CD8-positive, alpha-beta T cell (primary cell): ENCODE measurements at regions of chr1 and their contacts with region 1.

Region 1: GRCh38 chr1:114757455-114758250 is at the start of gene CSDE1:
- DNase-seq: peak; percentile 94 to 99 (median 97)
- ATAC-seq: peak; percentile 79
- H3K4me3 ChIP-seq: peak within 1 kb of the TSS; percentile 95 to 100
- H3K4me3 Mint-ChIP-seq: peak within 1 kb of the TSS; percentile 100
- H3K27ac ChIP-seq: peak within 1 kb of the TSS; percentile 97 to 100
- H3K27ac Mint-ChIP-seq: peak within 1 kb of the TSS; percentile 100
- H3K4me1 ChIP-seq: peaks cover 44% of the 10 kb centered on the region
- H3K4me1 Mint-ChIP-seq: peaks cover 51% of the 10 kb centered on the region
- H3K27me3 ChIP-seq: no peaks in the 10 kb centered on the region
- H3K27me3 Mint-ChIP-seq: no peaks in the 10 kb centered on the region
- CTCF ChIP-seq: no peak
- total RNA-seq, gene CSDE1: 732 to 774 TPM

Region 2: GRCh38 chr1:112955781-112956543 is 1801.7 kb before region 1 on chr1 and contains the start of gene SLC16A1:
- CTCF ChIA-PET with region 1: no interaction called
- POLR2A ChIA-PET with region 1: no interaction called
- intact Hi-C with region 1: loop called in 1 of 2 experiments (anchors 10 kb)
- DNase-seq: peak; percentile 68 to 92 (median 86)
- ATAC-seq: peak; percentile 78
- H3K4me3 ChIP-seq: peak within 1 kb of the TSS; percentile 97 to 98
- H3K4me3 Mint-ChIP-seq: peak within 1 kb of the TSS; percentile 98
- H3K27ac ChIP-seq: peak within 1 kb of the TSS; percentile 79 to 87
- H3K27ac Mint-ChIP-seq: peak within 1 kb of the TSS; percentile 90
- H3K4me1 ChIP-seq: peaks cover 25% of the 10 kb centered on the region
- H3K4me1 Mint-ChIP-seq: peaks cover 63% of the 10 kb centered on the region
- H3K27me3 ChIP-seq: no peaks in the 10 kb centered on the region
- H3K27me3 Mint-ChIP-seq: no peaks in the 10 kb centered on the region
- CTCF ChIP-seq: no peak
- total RNA-seq, gene SLC16A1: 34.0 to 34.1 TPM

Region 3: DNA sequence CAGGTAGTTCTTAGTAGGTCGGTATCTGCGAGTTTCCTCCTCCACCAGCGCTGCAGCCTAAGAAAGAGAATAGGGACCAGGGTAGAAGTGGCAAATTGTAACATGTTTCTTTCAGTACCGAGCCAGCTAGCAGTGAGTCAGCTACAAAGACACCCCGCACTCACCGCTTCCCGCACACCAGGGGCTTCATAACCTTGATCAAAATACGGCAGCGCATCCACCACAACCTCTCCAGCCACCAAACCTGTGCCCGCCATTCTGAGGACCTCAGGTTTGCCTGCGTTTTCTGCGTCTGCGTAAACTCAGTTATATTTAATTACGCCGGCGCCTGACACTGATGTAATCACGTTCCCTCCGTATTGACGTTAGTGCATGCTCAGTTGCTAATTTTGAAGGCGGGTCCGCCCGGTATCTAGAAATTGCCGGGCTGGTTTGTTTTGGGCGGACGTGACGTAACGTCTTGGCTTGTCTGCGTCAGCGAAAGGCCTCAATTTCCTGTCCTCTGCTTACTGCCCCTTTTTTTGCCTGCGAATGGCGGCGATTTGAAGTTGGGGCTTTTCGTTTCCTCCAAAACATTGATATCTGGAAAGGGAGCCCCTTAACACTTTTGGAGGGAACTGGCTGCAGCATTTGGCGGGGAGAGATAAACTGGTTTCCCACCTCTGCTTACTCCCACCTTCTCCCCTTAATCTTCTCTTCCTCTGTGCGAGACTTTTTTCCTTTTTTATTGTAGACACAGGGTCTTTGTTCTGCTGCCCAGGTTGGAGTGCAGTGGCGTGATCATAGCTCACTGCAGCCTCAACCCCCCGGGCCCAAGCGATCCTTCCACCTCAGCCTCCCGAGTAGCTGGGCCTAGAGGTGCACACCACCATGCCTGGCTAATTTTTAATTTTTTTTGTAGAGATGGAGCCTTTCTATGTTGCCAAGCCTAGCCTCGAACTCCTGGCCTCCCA is 176.0 kb before region 1 on chr1 and contains the start of gene BCAS2:
- CTCF ChIA-PET with region 1: no interaction called
- POLR2A ChIA-PET with region 1: interaction called, 4 read pairs
- intact Hi-C with region 1: loop called in 1 of 2 experiments (anchors 1 kb)
- DNase-seq: peak; percentile 90 to 99 (median 95)
- ATAC-seq: peak; percentile 95
- H3K4me3 ChIP-seq: peak within 1 kb of the TSS; percentile 56 to 72
- H3K4me3 Mint-ChIP-seq: peak within 1 kb of the TSS; percentile 96
- H3K27ac ChIP-seq: peak within 1 kb of the TSS; percentile 84 to 94
- H3K27ac Mint-ChIP-seq: peak within 1 kb of the TSS; percentile 99
- H3K4me1 ChIP-seq: peaks cover 22% of the 10 kb centered on the region
- H3K4me1 Mint-ChIP-seq: peaks cover 46% of the 10 kb centered on the region
- H3K27me3 ChIP-seq: no peaks in the 10 kb centered on the region
- H3K27me3 Mint-ChIP-seq: no peaks in the 10 kb centered on the region
- CTCF ChIP-seq: no peak
- total RNA-seq, gene BCAS2: 113 to 125 TPM

Region 4: GRCh38 chr1:114670083-114671010 is 87.3 kb before region 1 on chr1:
- CTCF ChIA-PET with region 1: no interaction called
- POLR2A ChIA-PET with region 1: no interaction called
- intact Hi-C with region 1: loop called in 1 of 2 experiments (anchors 2 kb)
- DNase-seq: peak in 8 of 9 experiments; percentile 2 to 90 (median 86)
- ATAC-seq: peak; percentile 96
- H3K4me3 ChIP-seq: peak overlapping the region; percentile 77 to 79
- H3K4me3 Mint-ChIP-seq: peak overlapping the region; percentile 98
- H3K27ac ChIP-seq: peak overlapping the region in 1 of 2 experiments; percentile 49
- H3K27ac Mint-ChIP-seq: peak overlapping the region; percentile 92
- H3K4me1 ChIP-seq: peaks cover 5% of the 10 kb centered on the region
- H3K4me1 Mint-ChIP-seq: peaks cover 14% of the 10 kb centered on the region
- H3K27me3 ChIP-seq: no peaks in the 10 kb centered on the region
- H3K27me3 Mint-ChIP-seq: peaks cover 11% of the 10 kb centered on the region
- CTCF ChIP-seq: no peak

Region 5: GRCh38 chr1:114716304-114717170 is 41.1 kb before region 1 on chr1 and contains the start of gene NRAS:
- CTCF ChIA-PET with region 1: no interaction called
- POLR2A ChIA-PET with region 1: interaction called, 23 read pairs
- intact Hi-C with region 1: loop called (anchors 1 kb)
- DNase-seq: peak; percentile 91 to 97 (median 97)
- ATAC-seq: peak; percentile 94
- H3K4me3 ChIP-seq: peak within 1 kb of the TSS; percentile 84 to 87
- H3K4me3 Mint-ChIP-seq: peak within 1 kb of the TSS; percentile 97
- H3K27ac ChIP-seq: peak within 1 kb of the TSS; percentile 94 to 99
- H3K27ac Mint-ChIP-seq: peak within 1 kb of the TSS; percentile 100
- H3K4me1 ChIP-seq: peaks cover 16% of the 10 kb centered on the region
- H3K4me1 Mint-ChIP-seq: peaks cover 34% of the 10 kb centered on the region
- H3K27me3 ChIP-seq: no peaks in the 10 kb centered on the region
- H3K27me3 Mint-ChIP-seq: no peaks in the 10 kb centered on the region
- CTCF ChIP-seq: no peak
- total RNA-seq, gene NRAS: 46.0 to 46.4 TPM

Region 6: GRCh38 chr1:115062542-115063011 is 304.9 kb after region 1 on chr1:
- CTCF ChIA-PET with region 1: no interaction called
- POLR2A ChIA-PET with region 1: no interaction called
- intact Hi-C with region 1: loop called in 1 of 2 experiments (anchors 10 kb)
- DNase-seq: peak; percentile 91 to 99 (median 94)
- ATAC-seq: peak; percentile 89
- H3K4me3 ChIP-seq: peak overlapping the region in 1 of 2 experiments; percentile 17
- H3K4me3 Mint-ChIP-seq: peak overlapping the region; percentile 79
- H3K27ac ChIP-seq: peak overlapping the region; percentile 74 to 93
- H3K27ac Mint-ChIP-seq: peak overlapping the region; percentile 100
- H3K4me1 ChIP-seq: peaks cover 35% of the 10 kb centered on the region
- H3K4me1 Mint-ChIP-seq: peaks cover 43% of the 10 kb centered on the region
- H3K27me3 ChIP-seq: no peaks in the 10 kb centered on the region
- H3K27me3 Mint-ChIP-seq: no peaks in the 10 kb centered on the region
- CTCF ChIP-seq: no peak

Region 7: DNA sequence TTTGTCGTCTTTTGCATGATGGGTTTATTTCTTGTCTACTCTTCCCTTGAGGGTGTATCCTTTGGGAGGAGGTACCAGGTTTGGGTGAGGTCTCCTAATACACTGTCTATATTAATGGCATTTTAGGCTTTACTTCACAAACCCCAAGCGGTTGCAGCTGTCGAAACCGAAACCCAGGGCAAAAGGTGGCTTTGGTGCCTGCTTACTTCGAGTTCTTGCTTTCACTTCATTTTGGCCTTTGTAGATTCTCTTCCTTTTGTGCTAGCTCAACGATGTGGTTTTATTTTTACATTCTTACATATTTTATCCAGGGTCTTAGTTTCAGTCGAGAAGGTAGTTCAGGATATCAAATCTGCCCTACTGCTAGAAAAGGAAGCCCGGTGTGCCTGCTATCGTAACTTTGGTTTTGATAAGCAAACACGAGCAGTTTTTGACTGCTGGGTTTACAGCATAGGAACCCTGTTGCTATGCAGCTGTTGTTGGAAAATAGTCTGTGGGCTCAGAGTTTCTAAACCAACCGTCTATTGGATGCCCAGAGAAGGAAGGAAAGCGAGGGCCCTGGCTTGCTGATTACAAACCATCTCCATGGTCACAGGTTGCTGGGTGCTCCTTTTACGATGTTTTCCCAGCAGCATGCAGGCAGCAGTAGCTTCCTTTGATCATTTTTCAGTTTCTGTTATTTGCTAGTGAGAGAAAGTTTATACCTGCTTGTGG is 341.5 kb after region 1 on chr1:
- CTCF ChIA-PET with region 1: no interaction called
- POLR2A ChIA-PET with region 1: interaction called, 3 read pairs
- intact Hi-C with region 1: loop called in 1 of 2 experiments (anchors 1 kb)
- DNase-seq: peak; percentile 55 to 96 (median 74)
- ATAC-seq: peak; percentile 89
- H3K4me3 ChIP-seq: peak overlapping the region; percentile 51 to 56
- H3K4me3 Mint-ChIP-seq: peak overlapping the region; percentile 86
- H3K27ac ChIP-seq: peak overlapping the region; percentile 95
- H3K27ac Mint-ChIP-seq: peak overlapping the region; percentile 97
- H3K4me1 ChIP-seq: peaks cover 27% of the 10 kb centered on the region
- H3K4me1 Mint-ChIP-seq: peaks cover 36% of the 10 kb centered on the region
- H3K27me3 ChIP-seq: no peaks in the 10 kb centered on the region
- H3K27me3 Mint-ChIP-seq: no peaks in the 10 kb centered on the region
- CTCF ChIP-seq: no peak